HEK293 (cell line): ENCODE measurements at regions of chr21 and their contacts with region 1.

Region 1: DNA sequence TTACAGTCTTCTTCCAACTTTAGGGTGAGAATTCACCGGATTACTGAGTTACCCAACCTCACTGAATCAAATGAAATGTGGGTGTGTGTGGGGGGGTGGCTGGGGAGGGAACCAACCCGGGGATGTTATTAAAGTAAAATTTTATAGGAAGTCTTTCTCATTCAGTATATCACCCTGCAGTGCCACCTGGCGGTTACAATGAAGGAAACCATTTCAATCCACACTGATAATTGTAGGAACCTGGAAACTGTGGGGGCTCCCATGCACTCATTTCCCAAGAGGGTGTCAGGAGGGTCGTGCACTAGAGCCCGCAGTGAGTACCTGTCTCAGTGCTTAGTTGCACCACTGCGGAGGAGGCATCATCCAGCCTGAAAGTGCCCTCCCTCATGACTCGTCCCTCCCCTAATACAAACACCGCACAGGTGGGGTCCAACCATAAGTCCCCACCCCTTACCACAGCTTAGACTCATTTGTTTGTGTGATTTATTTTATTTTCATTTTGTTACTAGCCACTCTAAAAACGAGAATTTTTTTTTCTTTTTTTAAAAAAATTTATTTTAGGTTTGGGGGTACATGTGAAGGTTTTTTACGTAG is 29.1 kb upstream of the IGSF5 start:
- H3K4me3 ChIP-seq: no peak overlapping the region
- H3K27ac ChIP-seq: no peak overlapping the region
- H3K4me1 ChIP-seq: no peaks in the 10 kb centered on the region
- CTCF ChIP-seq: no peak

Region 2: DNA sequence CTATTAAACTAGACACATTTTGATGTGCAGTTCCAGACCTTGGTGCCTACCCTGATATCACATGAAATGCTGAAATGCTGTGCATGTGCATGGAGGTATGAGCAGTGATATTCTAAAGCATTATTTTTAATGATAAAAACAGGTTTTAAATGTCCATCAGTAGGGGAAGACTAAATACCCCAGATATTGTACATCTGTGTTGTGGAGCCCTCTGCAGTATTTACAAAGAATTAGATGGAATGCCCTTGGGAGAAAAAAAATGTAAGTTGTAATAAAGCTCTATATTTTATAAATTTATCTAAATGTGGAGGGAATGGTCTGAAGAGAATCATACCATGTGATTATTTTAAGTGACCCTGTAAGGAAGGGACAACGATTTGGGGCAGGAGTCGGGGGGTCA is 10.1 kb before region 1 on chr21:
- CTCF ChIA-PET with region 1: interaction called, 13 read pairs
- POLR2A ChIA-PET with region 1: interaction called, 3 read pairs
- H3K4me3 ChIP-seq: no peak overlapping the region
- H3K27ac ChIP-seq: no peak overlapping the region
- H3K4me1 ChIP-seq: no peaks in the 10 kb centered on the region
- CTCF ChIP-seq: no peak

Region 3: GRCh38 chr21:39726132-39726727 is 10.3 kb after region 1 on chr21:
- CTCF ChIA-PET with region 1: interaction called, 26 read pairs
- POLR2A ChIA-PET with region 1: no interaction called
- H3K4me3 ChIP-seq: no peak overlapping the region
- H3K27ac ChIP-seq: no peak overlapping the region
- H3K4me1 ChIP-seq: no peaks in the 10 kb centered on the region
- CTCF ChIP-seq: no peak

Region 4: GRCh38 chr21:39822042-39822441 is 106.1 kb after region 1 on chr21:
- CTCF ChIA-PET with region 1: no interaction called
- POLR2A ChIA-PET with region 1: no interaction called
- H3K4me3 ChIP-seq: no peak overlapping the region
- H3K27ac ChIP-seq: no peak overlapping the region
- H3K4me1 ChIP-seq: no peaks in the 10 kb centered on the region
- CTCF ChIP-seq: no peak

Region 5: DNA sequence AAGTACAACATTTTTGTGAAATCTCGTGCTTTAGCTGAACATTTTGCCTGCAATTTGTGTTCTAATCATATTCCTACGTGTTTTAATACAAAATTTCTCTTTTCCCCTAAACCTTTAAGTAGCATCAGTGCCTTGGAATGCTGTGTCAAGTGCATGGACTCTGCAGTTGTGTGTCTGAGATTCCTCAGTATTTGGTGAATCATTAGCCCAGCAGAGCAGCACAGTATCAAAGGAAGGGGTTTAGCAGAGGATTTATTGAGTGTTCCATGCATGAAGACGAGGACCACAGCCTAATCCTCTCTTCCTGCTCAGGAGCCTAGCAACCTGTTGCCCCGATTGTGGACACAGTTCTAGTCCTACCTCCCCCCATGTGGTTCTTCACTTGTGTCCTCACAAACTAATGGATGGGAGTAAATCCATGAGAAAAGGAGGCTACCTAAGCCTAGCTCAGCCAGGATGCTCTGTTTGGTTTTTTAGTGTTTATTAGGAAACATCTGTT is 122.0 kb after region 1 on chr21:
- CTCF ChIA-PET with region 1: no interaction called
- POLR2A ChIA-PET with region 1: no interaction called
- H3K4me3 ChIP-seq: no peak overlapping the region
- H3K27ac ChIP-seq: no peak overlapping the region
- H3K4me1 ChIP-seq: no peaks in the 10 kb centered on the region
- CTCF ChIP-seq: no peak

Region 6: GRCh38 chr21:39885119-39885848 is 169.4 kb after region 1 on chr21:
- CTCF ChIA-PET with region 1: no interaction called
- POLR2A ChIA-PET with region 1: no interaction called
- H3K4me3 ChIP-seq: no peak overlapping the region
- H3K27ac ChIP-seq: no peak overlapping the region
- H3K4me1 ChIP-seq: no peaks in the 10 kb centered on the region
- CTCF ChIP-seq: no peak